ENCODE measurements at regions of chr10 and their contacts with region 1.

Region 1: DNA sequence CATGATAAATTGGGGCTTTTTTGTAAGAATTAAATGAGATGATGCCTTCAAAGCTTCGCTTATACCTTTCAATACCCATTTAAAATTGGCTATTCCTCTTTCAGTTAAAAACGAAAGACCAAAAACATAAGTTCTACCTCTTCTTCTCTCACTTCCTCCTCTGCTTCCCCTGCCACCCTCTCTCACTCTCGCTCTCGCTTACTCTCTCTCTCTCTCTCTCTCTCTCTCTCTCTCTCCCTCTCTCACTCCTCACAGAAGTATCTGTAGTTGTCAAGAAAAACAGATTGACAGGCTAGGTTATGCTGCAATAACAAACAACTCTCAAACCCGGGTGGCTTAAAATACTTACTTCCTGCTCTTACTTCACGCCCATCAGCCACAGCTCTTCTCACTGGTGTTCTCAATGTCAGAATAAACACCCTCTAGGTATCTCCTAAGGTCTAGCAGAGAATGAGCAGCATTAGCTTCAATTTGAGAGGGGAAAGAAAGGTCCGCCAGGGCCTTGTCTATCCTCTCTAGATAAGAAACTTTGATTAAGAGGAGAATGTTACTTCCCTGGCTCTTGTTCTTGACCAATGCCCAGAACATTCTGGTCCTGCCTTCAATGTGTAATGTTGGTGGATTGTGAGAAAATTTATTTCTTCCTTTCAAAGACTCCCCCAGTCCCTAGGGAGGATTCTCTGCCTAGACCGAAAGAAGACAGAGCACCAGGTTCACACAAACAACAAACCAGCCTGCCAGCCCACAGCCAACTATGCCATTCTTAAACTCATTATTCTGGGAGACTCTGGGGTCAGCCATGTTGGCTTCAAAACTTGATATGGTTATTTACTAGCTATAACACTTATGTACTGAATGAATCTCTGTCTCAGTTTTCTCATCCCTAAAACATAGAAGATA is 1028.7 kb downstream of the XPNPEP1 start:
- DNase-seq: no peak
- ATAC-seq: peak; percentile 83
- H3K4me3 Mint-ChIP-seq: peak overlapping the region; percentile 52
- H3K27ac Mint-ChIP-seq: peak overlapping the region; percentile 86
- H3K4me1 Mint-ChIP-seq: peaks cover 28% of the 10 kb centered on the region
- H3K27me3 Mint-ChIP-seq: no peaks in the 10 kb centered on the region
- CTCF ChIP-seq: no peak

Region 2: GRCh38 chr10:108716352-108716751 is 178.3 kb before region 1 on chr10:
- CTCF ChIA-PET with region 1: no interaction called
- POLR2A ChIA-PET with region 1: interaction called, 12 read pairs
- intact Hi-C with region 1: no loop called
- DNase-seq: no peak
- ATAC-seq: no peak
- H3K4me3 Mint-ChIP-seq: no peak overlapping the region
- H3K27ac Mint-ChIP-seq: no peak overlapping the region
- H3K4me1 Mint-ChIP-seq: no peaks in the 10 kb centered on the region
- H3K27me3 Mint-ChIP-seq: no peaks in the 10 kb centered on the region
- CTCF ChIP-seq: no peak

Region 3: GRCh38 chr10:108850138-108850854 is 44.4 kb before region 1 on chr10:
- CTCF ChIA-PET with region 1: no interaction called
- POLR2A ChIA-PET with region 1: interaction called, 3 read pairs
- intact Hi-C with region 1: loop called (anchors 1 kb)
- DNase-seq: no peak
- ATAC-seq: peak; percentile 81
- H3K4me3 Mint-ChIP-seq: peak overlapping the region; percentile 53
- H3K27ac Mint-ChIP-seq: peak overlapping the region; percentile 50
- H3K4me1 Mint-ChIP-seq: peaks cover 40% of the 10 kb centered on the region
- H3K27me3 Mint-ChIP-seq: no peaks in the 10 kb centered on the region
- CTCF ChIP-seq: no peak